CD8-positive, alpha-beta T cell (primary cell): ENCODE measurements at regions of chr3 and their contacts with region 1.

Region 1: GRCh38 chr3:82610236-82610635 is 848.8 kb upstream of the GBE1 start:
- DNase-seq: no peak
- ATAC-seq: no peak
- H3K4me3 ChIP-seq: no peak overlapping the region
- H3K4me3 Mint-ChIP-seq: no peak overlapping the region
- H3K27ac ChIP-seq: no peak overlapping the region
- H3K27ac Mint-ChIP-seq: no peak overlapping the region
- H3K4me1 ChIP-seq: no peaks in the 10 kb centered on the region
- H3K4me1 Mint-ChIP-seq: no peaks in the 10 kb centered on the region
- H3K27me3 ChIP-seq: no peaks in the 10 kb centered on the region
- H3K27me3 Mint-ChIP-seq: no peaks in the 10 kb centered on the region
- CTCF ChIP-seq: no peak

Region 2: DNA sequence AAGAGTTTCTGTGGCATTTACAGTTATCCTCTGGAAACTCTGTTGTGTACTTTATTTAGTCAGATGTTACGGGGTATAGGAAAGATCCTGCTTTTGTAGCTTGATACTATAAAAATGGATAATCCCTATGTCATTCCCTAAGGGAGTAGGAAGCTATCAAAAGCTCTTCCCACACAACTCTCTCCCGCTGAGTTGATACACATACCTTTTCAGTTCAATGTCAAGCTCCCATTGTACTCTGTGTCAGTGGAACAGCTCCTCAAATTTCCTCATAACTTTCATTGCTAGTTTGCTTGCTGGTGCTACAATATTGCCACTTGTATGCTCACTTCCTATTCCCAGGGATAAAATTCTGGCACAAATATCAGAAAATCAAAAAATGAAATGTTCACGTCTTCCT is 44.5 kb after region 1 on chr3:
- CTCF ChIA-PET with region 1: no interaction called
- POLR2A ChIA-PET with region 1: no interaction called
- intact Hi-C with region 1: loop called in 1 of 2 experiments (anchors 1 kb)
- DNase-seq: no peak
- ATAC-seq: no peak
- H3K4me3 ChIP-seq: no peak overlapping the region
- H3K4me3 Mint-ChIP-seq: no peak overlapping the region
- H3K27ac ChIP-seq: no peak overlapping the region
- H3K27ac Mint-ChIP-seq: no peak overlapping the region
- H3K4me1 ChIP-seq: no peaks in the 10 kb centered on the region
- H3K4me1 Mint-ChIP-seq: no peaks in the 10 kb centered on the region
- H3K27me3 ChIP-seq: no peaks in the 10 kb centered on the region
- H3K27me3 Mint-ChIP-seq: no peaks in the 10 kb centered on the region
- CTCF ChIP-seq: no peak

Region 3: DNA sequence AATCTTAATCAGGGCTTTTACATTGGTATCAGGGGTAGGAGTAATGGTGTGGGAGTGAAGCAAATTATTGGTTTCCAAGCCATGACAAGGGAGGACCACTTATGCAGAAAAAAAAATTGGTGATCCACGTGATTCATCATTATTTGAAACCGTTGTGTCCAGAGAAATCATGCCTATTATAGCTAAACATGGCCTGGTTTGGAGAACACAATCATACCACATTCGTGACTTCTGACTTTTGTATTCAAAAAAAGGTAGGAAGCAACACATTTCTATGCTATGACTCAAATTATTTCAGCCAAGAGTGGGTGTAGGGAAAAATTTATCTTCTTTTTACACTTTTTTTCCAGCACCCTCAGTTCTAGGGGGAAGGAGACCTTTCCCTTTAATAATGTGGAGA is 75.5 kb after region 1 on chr3:
- CTCF ChIA-PET with region 1: no interaction called
- POLR2A ChIA-PET with region 1: no interaction called
- intact Hi-C with region 1: no loop called
- DNase-seq: no peak
- ATAC-seq: no peak
- H3K4me3 ChIP-seq: no peak overlapping the region
- H3K4me3 Mint-ChIP-seq: no peak overlapping the region
- H3K27ac ChIP-seq: no peak overlapping the region
- H3K27ac Mint-ChIP-seq: no peak overlapping the region
- H3K4me1 ChIP-seq: no peaks in the 10 kb centered on the region
- H3K4me1 Mint-ChIP-seq: no peaks in the 10 kb centered on the region
- H3K27me3 ChIP-seq: no peaks in the 10 kb centered on the region
- H3K27me3 Mint-ChIP-seq: no peaks in the 10 kb centered on the region
- CTCF ChIP-seq: no peak